ENCODE measurements at regions of chr15 and their contacts with region 1.

Region 1: DNA sequence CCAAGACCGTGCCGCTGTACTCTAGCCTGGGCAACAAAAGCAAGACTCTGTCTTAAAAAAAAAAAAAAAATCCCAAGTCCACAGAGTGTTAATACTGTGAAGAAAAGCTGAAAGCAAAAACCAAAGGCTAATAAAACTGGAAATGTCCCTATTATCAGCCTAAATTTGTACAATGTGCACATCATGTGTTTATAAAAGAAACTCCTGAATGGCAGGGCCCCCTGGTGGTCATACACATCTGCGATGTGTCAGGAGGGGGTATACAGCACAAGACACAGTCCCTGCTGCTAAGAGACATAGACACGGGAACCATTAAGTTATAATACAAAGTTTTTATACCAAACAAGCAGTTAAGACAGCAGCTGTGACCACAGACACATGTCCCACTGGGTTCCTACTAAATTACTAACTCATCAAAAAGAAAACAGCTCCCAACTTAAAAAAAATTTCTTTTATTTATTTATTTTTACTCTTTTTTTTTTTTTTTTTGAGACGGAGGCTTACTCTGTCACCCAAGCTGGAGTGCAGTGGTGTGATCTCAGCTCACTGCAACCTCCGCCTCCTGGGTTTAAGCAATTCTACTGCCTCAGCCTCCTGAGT is 31.0 kb downstream of the IDH2 start:
- H3K4me3 ChIP-seq: no peak overlapping the region
- H3K27ac ChIP-seq: no peak overlapping the region
- H3K4me1 ChIP-seq: no peaks in the 10 kb centered on the region
- CTCF ChIP-seq: 0 out of 2 replicates have a peak, but pooled peaks have one; percentile 20

Region 2: DNA sequence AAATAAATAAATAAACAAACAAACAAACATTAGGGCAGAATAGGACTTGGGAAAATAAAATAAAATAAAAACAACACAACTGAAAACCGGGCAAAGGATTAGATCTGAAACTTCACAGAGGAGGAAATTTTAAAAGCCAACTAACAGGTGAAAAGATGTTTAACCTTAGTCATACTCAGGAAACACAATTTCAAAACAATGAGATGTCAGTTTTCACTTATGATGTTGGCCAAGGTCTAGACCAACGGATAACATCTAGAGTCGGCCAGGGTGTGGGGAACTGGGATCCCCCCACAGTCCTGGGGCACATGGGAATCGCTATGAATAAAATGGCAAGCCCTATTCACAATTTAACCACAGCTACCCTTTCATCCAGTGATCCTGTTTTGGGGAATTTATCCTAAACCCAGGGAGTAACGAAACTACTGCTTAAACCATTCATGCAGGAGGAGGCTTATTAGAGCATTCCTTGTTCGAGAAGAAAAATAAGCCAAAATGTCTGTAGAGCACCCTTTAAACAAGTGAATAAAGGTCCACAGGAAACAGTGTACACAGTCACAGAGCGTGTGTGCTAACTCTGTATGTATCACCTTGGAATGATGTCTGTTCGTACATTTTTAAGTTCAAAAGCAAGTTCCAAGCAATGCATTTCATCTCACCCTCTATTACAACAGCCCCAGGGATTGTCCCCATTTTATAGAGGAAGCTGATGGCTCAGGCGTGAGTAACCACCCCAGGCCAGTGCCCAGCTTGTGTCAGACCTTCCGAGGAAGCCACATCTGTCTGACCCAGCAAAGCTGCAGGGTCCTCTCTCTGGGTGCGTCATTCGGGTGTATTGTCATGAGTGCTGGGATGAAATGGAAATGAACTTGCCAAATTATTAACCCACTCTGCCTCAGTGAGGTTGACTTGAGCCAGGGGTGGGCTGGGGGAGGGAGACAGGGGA is 250.4 kb before region 1 on chr15:
- CTCF ChIA-PET with region 1: no interaction called
- POLR2A ChIA-PET with region 1: no interaction called
- H3K4me3 ChIP-seq: no peak overlapping the region
- H3K27ac ChIP-seq: no peak overlapping the region
- H3K4me1 ChIP-seq: 0 out of 2 replicates have a peak, but pooled peaks cover 2% of the 10 kb centered on the region
- CTCF ChIP-seq: no peak

Region 3: GRCh38 chr15:89893696-89894455 is 177.4 kb before region 1 on chr15 and contains the start of gene AP3S2:
- CTCF ChIA-PET with region 1: interaction called, 20 read pairs
- POLR2A ChIA-PET with region 1: interaction called, 4 read pairs
- H3K4me3 ChIP-seq: peak within 1 kb of the TSS; percentile 64
- H3K27ac ChIP-seq: peak within 1 kb of the TSS; percentile 84
- H3K4me1 ChIP-seq: peaks cover 3% of the 10 kb centered on the region
- CTCF ChIP-seq: no peak

Region 4: GRCh38 chr15:89912674-89913396 is 158.5 kb before region 1 on chr15 and contains the start of gene ARPIN:
- CTCF ChIA-PET with region 1: interaction called, 10 read pairs
- POLR2A ChIA-PET with region 1: interaction called, 5 read pairs
- H3K4me3 ChIP-seq: peak within 1 kb of the TSS; percentile 73
- H3K27ac ChIP-seq: peak within 1 kb of the TSS; percentile 91
- H3K4me1 ChIP-seq: peaks cover 14% of the 10 kb centered on the region
- CTCF ChIP-seq: peak; percentile 47; the same call in 1 of the 2 replicates

Region 5: GRCh38 chr15:90001683-90002427 is 69.5 kb before region 1 on chr15:
- CTCF ChIA-PET with region 1: interaction called, 16 read pairs
- POLR2A ChIA-PET with region 1: no interaction called
- H3K4me3 ChIP-seq: peak overlapping the region; percentile 64
- H3K27ac ChIP-seq: peak overlapping the region; percentile 67; the same call in 1 of the 2 replicates
- H3K4me1 ChIP-seq: peaks cover 16% of the 10 kb centered on the region
- CTCF ChIP-seq: no peak

Region 6: GRCh38 chr15:90016721-90017120 is 54.6 kb before region 1 on chr15:
- CTCF ChIA-PET with region 1: interaction called, 10 read pairs
- POLR2A ChIA-PET with region 1: no interaction called
- H3K4me3 ChIP-seq: no peak overlapping the region
- H3K27ac ChIP-seq: no peak overlapping the region
- H3K4me1 ChIP-seq: peaks cover 2% of the 10 kb centered on the region; the same call in 1 of the 2 replicates
- CTCF ChIP-seq: no peak

Region 7: DNA sequence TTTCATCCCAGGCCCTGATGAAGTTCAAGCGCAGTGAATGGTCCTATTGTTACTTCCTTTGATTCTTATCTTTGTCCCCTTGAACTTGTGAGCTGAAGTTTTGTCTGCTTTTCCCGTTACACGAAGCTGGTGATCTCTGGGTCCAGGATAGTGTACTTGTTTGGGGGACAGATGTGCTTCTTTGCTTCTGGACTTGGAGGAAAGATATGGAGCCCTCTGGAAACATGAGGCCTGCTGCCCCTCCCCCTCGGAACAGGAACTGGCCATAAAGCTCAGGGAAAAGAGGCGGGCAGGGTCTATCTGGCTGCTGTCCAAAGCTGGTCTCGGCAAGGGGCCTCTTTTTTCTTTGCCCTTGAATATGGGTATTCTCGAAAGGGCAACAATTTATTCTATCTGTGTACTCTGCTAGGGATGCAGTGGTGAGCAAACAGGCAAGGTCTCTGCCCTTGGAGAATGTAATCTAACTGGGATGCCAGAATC is 16.6 kb before region 1 on chr15:
- CTCF ChIA-PET with region 1: interaction called, 17 read pairs
- POLR2A ChIA-PET with region 1: no interaction called
- H3K4me3 ChIP-seq: no peak overlapping the region
- H3K27ac ChIP-seq: peak overlapping the region; percentile 11; the same call in 1 of the 2 replicates
- H3K4me1 ChIP-seq: peaks cover 9% of the 10 kb centered on the region
- CTCF ChIP-seq: no peak

Measured in HEK293 (cell line).